ENCODE measurements at regions of chr18 and their contacts with region 1.

Region 1: GRCh38 chr18:5879479-5879882 is 15.8 kb downstream of the TMEM200C start:
- DNase-seq: no peak

Region 2: GRCh38 chr18:5662586-5663090 is 216.8 kb before region 1 on chr18:
- intact Hi-C with region 1: no loop called
- DNase-seq: no peak

Region 3: GRCh38 chr18:6221602-6222014 is 342.1 kb after region 1 on chr18:
- intact Hi-C with region 1: loop called (anchors 5 kb)
- DNase-seq: no peak

Region 4: GRCh38 chr18:6482198-6482977 is 602.9 kb after region 1 on chr18:
- intact Hi-C with region 1: loop called (anchors 5 kb)
- DNase-seq: no peak

Region 5: GRCh38 chr18:6885992-6886796 is 1006.7 kb after region 1 on chr18:
- intact Hi-C with region 1: loop called (anchors 10 kb)
- DNase-seq: no peak

Measured in cardiac septum (tissue), 1 donor.